Tibial artery (tissue), 4 donors: ENCODE measurements at regions of chr9 and their contacts with region 1.

Region 1: DNA sequence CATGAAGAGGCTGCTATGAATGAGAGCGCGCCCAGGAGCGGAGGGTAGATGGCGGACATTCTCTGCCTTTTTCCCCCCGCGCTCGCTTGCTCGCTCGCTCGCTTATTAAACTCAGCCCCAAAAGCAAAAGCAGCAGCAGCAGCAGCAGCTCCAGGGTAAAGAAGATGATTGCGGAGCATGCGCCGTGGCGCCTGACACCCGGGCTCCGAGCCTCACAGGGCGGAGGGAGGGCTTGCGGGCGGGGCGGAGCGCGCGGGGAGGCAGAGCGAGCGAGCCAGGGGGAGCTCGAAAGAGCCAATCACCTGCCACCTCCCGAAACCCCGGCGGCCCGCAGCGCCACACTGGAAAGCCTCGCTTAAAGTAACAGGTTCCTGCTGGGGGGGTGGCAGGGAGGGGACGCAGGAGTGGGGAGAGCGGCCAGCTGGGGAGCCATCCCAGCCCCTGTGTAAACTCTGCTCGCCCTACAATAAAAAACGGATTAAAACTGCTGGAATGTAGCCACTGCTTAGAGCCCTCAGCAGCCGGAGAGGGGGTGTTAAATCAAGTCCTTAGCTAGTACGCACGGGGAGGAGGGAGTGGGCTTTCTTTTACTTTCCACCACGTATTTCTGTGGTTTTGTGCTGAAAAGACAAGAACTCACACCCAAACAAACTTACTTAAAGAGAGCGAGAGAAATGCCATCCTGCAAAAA is at the start of gene MLLT3:
- DNase-seq: peak; percentile 97 to 98
- H3K4me3 ChIP-seq: peak within 1 kb of the TSS; percentile 93 to 96
- H3K27ac ChIP-seq: peak within 1 kb of the TSS; percentile 87
- H3K4me1 ChIP-seq: peaks cover 0 to 33% (median 2%) of the 10 kb centered on the region in 4 donors
- H3K27me3 ChIP-seq: no peaks in the 10 kb centered on the region
- CTCF ChIP-seq: no peak

Region 2: GRCh38 chr9:20356403-20357035 is 266.0 kb before region 1 on chr9:
- intact Hi-C with region 1: loop called (anchors 5 kb)
- DNase-seq: peak; percentile 50 to 71
- H3K4me3 ChIP-seq: peak overlapping the region; percentile 22 to 33
- H3K27ac ChIP-seq: peak overlapping the region; percentile 25 to 45
- H3K4me1 ChIP-seq: peaks cover 0 to 31% (median 13%) of the 10 kb centered on the region in 4 donors
- H3K27me3 ChIP-seq: no peaks in the 10 kb centered on the region
- CTCF ChIP-seq: peak; percentile 46 to 66

Region 3: DNA sequence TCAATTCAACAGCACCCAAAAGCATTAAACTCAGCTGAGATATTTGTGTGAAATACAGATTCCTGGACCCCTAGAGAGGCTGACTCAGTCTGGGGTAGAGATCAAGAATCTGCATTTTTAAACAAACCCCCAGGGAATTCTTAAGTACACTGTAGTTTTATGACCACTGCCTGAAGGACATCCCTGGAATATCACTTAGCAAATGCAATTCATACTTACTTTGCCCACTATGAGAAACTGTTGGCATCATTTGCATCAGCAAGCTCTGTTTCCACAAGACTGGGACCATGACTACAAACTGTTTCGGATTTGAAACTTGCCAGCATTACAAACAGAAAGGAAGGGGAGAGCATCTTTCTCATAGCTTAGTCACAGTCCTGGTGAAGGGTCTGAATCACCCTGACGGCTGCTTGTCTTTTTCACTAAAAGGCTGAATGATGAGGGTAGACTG is 63.9 kb before region 1 on chr9:
- intact Hi-C with region 1: loop called (anchors 10 kb)
- DNase-seq: no peak
- H3K4me3 ChIP-seq: no peak overlapping the region
- H3K27ac ChIP-seq: no peak overlapping the region
- H3K4me1 ChIP-seq: peaks cover 0 to 29% (median 16%) of the 10 kb centered on the region in 4 donors
- H3K27me3 ChIP-seq: no peaks in the 10 kb centered on the region
- CTCF ChIP-seq: no peak

Region 4: GRCh38 chr9:20582150-20582549 is 40.3 kb before region 1 on chr9:
- intact Hi-C with region 1: no loop called
- DNase-seq: no peak
- H3K4me3 ChIP-seq: no peak overlapping the region
- H3K27ac ChIP-seq: no peak overlapping the region
- H3K4me1 ChIP-seq: no peaks in the 10 kb centered on the region
- H3K27me3 ChIP-seq: no peaks in the 10 kb centered on the region
- CTCF ChIP-seq: no peak

Region 5: GRCh38 chr9:20684035-20684872 is 61.8 kb after region 1 on chr9 and contains the start of gene FOCAD:
- intact Hi-C with region 1: loop called (anchors 5 kb)
- DNase-seq: peak; percentile 95 to 97
- H3K4me3 ChIP-seq: peak within 1 kb of the TSS; percentile 76 to 85
- H3K27ac ChIP-seq: peak within 1 kb of the TSS; percentile 80 to 84
- H3K4me1 ChIP-seq: peaks cover 0 to 16% (median 9%) of the 10 kb centered on the region in 4 donors
- H3K27me3 ChIP-seq: no peaks in the 10 kb centered on the region
- CTCF ChIP-seq: peak in 1 of 2 experiments; percentile 6

Region 6: GRCh38 chr9:20941174-20941690 is 318.8 kb after region 1 on chr9:
- intact Hi-C with region 1: loop called (anchors 5 kb)
- DNase-seq: peak in 1 of 2 donors; percentile 37
- H3K4me3 ChIP-seq: no peak overlapping the region
- H3K27ac ChIP-seq: no peak overlapping the region
- H3K4me1 ChIP-seq: no peaks in the 10 kb centered on the region
- H3K27me3 ChIP-seq: no peaks in the 10 kb centered on the region
- CTCF ChIP-seq: peak; percentile 69 to 76

Region 7: GRCh38 chr9:21102305-21102704 is 479.8 kb after region 1 on chr9:
- intact Hi-C with region 1: loop called (anchors 10 kb)
- DNase-seq: no peak
- H3K4me3 ChIP-seq: no peak overlapping the region
- H3K27ac ChIP-seq: no peak overlapping the region
- H3K4me1 ChIP-seq: peaks cover 0 to 7% (median 0%) of the 10 kb centered on the region in 4 donors
- H3K27me3 ChIP-seq: no peaks in the 10 kb centered on the region
- CTCF ChIP-seq: no peak